ENCODE measurements at regions of chr13 and their contacts with region 1.

Region 1: DNA sequence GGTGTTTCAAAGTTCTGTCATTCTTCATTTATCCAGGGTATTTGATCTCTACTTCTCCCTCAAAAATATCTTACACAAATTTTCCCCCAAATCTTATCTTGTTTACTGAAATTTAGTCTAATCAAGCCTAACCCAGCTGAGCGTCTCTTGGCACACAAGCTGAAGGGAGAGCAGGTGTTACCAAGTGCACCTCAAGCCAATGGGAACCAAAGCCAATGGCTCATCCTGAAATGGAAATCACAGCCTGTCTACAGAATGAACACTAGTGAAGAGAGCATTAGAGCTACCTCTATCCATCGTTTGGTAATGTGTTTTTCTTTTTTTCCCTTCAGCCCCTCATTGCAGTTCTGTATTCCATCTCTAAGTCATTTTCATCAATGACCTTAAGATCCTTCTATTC is 1350.8 kb downstream of the OLFM4 start:
- H3K4me3 Mint-ChIP-seq: no peak overlapping the region
- H3K27ac Mint-ChIP-seq: no peak overlapping the region
- H3K4me1 Mint-ChIP-seq: no peaks in the 10 kb centered on the region
- H3K27me3 Mint-ChIP-seq: no peaks in the 10 kb centered on the region

Region 2: DNA sequence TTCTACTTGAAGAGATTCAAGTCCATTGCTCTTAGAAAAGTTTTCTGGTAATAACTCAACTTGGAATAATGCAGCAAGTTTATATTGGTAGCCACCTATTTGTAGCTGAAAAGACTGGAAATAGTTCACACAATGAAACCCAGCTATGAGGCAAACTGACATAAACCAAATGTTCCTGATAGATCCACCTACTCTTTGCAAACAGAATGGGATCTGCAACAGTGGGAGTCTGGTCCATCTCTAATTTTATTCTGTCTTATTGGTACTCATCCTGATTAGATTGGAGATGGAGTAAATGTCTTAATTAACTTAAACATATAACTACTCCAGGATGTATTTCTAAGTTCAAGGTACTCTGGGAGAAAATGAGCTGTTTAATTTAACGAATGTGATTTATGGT is 912.9 kb before region 1 on chr13:
- intact Hi-C with region 1: no loop called
- H3K4me3 Mint-ChIP-seq: no peak overlapping the region
- H3K27ac Mint-ChIP-seq: no peak overlapping the region
- H3K4me1 Mint-ChIP-seq: no peaks in the 10 kb centered on the region
- H3K27me3 Mint-ChIP-seq: no peaks in the 10 kb centered on the region

Region 3: DNA sequence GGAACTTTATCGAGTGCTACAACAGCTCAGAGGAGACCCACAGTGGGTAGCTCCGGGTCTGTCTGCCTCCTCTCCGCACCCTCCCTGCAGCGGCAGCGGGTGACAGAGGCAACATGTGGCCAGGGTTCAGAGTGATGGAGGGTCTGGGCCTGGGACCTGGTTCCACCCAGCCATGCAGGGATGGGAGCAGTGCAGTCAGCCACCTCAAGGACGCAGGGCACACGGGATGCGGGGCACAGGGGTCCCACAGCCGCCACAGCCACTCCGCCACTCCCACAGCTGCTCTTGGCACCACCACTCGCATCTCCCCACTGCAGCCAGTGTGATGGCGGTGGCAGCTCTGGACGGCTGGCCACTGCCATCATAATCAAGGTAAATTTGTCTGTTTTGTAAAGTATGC is 458.0 kb before region 1 on chr13:
- intact Hi-C with region 1: no loop called
- H3K4me3 Mint-ChIP-seq: no peak overlapping the region
- H3K27ac Mint-ChIP-seq: no peak overlapping the region
- H3K4me1 Mint-ChIP-seq: no peaks in the 10 kb centered on the region
- H3K27me3 Mint-ChIP-seq: no peaks in the 10 kb centered on the region

Region 4: DNA sequence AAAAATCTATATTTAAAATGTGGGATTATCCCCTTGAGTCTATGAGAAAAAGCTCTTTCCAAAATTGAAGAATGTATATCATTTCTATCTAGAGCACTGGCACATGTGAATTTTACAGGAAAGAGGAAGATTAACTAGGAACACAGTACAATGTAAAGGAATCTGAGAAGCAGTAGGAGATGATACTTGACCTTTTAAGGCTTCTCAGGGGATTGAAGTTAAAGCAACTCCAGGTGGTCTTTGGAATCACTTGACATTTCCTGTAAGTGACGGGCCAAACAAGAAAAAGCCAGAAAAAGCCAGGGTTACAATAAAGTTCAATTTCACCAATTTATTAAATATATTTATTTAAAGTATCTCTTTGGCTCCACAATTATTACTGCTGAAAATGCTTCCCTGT is 23.0 kb after region 1 on chr13:
- intact Hi-C with region 1: loop called (anchors 2 kb)
- H3K4me3 Mint-ChIP-seq: no peak overlapping the region
- H3K27ac Mint-ChIP-seq: no peak overlapping the region
- H3K4me1 Mint-ChIP-seq: no peaks in the 10 kb centered on the region
- H3K27me3 Mint-ChIP-seq: no peaks in the 10 kb centered on the region

Measured in dendritic cell treated with granulocyte-macrophage colony-stimulating factor and Interleukin-4, amounts not matched to agents 40 ng/mL and 50 ng/mL, for 4 days (primary cell).